ENCODE measurements at regions of chr22 and their contacts with region 1.

Region 1: GRCh38 chr22:45577746-45578523 is 75.3 kb downstream of the FBLN1 start:
- DNase-seq: peak; percentile 85
- ATAC-seq: peak; percentile 71 to 87

Region 2: DNA sequence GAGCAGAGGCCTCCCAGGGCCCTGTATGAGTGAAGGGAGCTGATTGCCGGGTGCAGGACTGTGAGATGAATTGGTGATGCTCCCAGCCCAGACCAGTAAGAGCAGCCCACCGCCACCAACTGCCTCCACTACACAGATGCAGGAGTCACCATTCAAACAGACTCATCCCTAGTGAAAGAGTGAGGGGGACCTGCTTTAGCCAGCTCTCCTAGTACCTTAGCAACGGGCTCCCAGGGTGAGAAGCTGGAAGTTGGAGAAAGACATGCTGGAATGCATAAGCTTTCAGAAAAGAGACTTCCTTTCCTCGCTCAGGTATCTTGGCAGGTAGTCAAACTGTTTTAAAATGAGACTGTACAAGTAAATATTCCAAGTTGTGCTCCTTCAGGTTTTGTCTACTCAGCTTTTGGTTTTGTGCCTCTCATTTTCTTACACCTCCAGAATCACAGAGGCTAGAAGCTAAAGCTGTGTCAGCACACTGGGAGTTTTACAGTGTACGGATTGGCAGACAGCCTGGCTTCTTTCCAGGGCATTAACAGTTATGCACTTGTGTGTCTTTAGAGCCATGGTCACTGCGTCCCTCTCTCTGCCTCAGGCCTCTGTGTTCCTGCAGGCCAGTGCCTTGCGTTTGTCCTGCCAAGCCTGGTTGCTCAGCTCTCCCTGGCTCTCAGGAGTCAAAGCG is 239.9 kb after region 1 on chr22:
- intact Hi-C with region 1: no loop called
- DNase-seq: peak; percentile 48
- ATAC-seq: peak; percentile 87 to 91

Region 3: GRCh38 chr22:45975164-45976161 is 397.5 kb after region 1 on chr22:
- intact Hi-C with region 1: loop called in 1 of 2 experiments (anchors 2 kb)
- DNase-seq: no peak
- ATAC-seq: no peak

Measured in left cardiac atrium (tissue), 4 donors.